Heart left ventricle (tissue), 16 donors: ENCODE measurements at regions of chr7 and their contacts with region 1.

Region 1: DNA sequence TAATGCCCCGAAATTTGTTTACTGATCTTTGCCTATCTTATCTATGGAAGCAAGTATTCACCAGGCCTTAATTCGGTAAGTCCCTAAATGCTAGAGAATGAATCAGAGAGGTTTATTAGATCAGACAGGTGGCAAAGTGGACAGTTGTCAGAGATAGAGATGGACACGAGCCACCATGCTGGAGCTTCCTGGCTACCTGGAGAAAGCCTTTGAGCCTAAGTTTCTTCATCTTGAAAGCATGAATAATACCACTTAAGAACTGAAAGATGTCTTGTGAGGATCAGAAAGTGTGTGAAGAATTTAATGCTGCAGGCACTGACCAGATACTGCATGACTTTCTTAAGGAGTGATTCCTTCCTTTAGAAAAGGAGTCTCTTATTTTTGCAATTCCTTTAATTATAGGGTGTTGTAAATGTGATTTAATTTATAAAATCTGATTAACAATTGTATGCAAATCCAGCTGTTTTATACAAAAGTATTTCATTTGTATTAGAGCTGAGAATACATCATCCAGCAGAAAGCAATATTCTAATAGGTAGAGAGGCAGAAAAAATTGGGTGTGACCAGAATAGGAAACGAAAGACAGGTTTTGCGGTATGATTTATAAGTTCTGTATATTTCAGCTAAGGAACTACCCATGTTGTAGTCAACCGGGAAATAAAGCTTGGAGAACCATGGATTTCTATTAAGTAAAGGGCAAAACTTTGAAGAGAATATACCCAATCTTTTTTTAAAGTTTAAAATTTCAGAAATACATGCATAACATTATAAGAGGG is 82.7 kb downstream of the SMURF1 start:
- DNase-seq: no peak
- ATAC-seq: no peak
- H3K4me3 ChIP-seq: no peak overlapping the region
- H3K27ac ChIP-seq: no peak overlapping the region
- H3K4me1 ChIP-seq: no peaks in the 10 kb centered on the region
- H3K27me3 ChIP-seq: no peaks in the 10 kb centered on the region
- CTCF ChIP-seq: no peak
- POLR2A ChIP-seq: no peak

Region 2: GRCh38 chr7:99123571-99124041 is 62.4 kb after region 1 on chr7:
- intact Hi-C with region 1: loop called in 1 of 10 experiments (anchors 10 kb)
- DNase-seq: no peak
- ATAC-seq: peak in 1 of 4 donors; percentile 21
- H3K4me3 ChIP-seq: no peak overlapping the region
- H3K27ac ChIP-seq: peak overlapping the region in 7 of 12 donors; percentile 4 to 44 (median 20)
- H3K4me1 ChIP-seq: peaks cover 5 to 81% (median 51%) of the 10 kb centered on the region in 12 donors
- H3K27me3 ChIP-seq: no peaks in the 10 kb centered on the region
- CTCF ChIP-seq: no peak
- POLR2A ChIP-seq: no peak